Heart right ventricle (tissue), 16 donors: ENCODE measurements at regions of chr4 and their contacts with region 1.

Region 1: DNA sequence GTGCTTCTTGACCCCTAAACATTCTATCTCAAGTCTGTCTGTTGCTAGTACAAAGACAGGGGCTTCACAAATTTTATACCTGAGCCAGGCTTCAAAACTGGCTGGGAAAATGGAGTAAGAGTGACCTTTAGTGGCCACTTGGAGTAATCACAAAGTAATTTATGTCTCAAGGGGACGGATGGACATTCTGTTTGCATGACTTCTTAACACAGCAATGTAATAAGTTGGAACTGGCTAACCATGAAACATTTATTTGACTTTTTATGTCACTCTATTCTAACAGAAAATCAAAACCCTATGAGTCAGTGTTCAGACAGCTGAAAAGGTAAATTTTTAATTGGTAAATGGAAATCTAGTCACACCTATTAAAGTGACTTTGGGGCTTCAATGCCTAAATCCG is 600.6 kb downstream of the ANKRD50 start:
- DNase-seq: peak in 1 of 2 donors; percentile 32
- ATAC-seq: peak in 7 of 8 donors; percentile 82 to 95 (median 91)
- H3K4me3 ChIP-seq: peak overlapping the region in 1 of 10 donors; percentile 9
- H3K27ac ChIP-seq: peak overlapping the region in 6 of 10 donors; percentile 1 to 59 (median 36)
- H3K4me1 ChIP-seq: peaks cover 0 to 18% (median 10%) of the 10 kb centered on the region in 9 donors
- H3K27me3 ChIP-seq: no peaks in the 10 kb centered on the region
- CTCF ChIP-seq: peak; percentile 57 to 87 (median 75)

Region 2: GRCh38 chr4:123127218-123127617 is 984.7 kb before region 1 on chr4:
- intact Hi-C with region 1: loop called in 5 of 10 experiments (anchors 5 to 10 kb)
- DNase-seq: no peak
- ATAC-seq: peak in 3 of 8 donors; percentile 46 to 55 (median 49)
- H3K4me3 ChIP-seq: no peak overlapping the region
- H3K27ac ChIP-seq: peak overlapping the region in 4 of 10 donors; percentile 28 to 36 (median 33)
- H3K4me1 ChIP-seq: peaks cover 0 to 25% (median 4%) of the 10 kb centered on the region in 9 donors
- H3K27me3 ChIP-seq: no peaks in the 10 kb centered on the region
- CTCF ChIP-seq: peak in 8 of 9 donors; percentile 31 to 69 (median 50)

Region 3: GRCh38 chr4:123380728-123381716 is 730.9 kb before region 1 on chr4:
- intact Hi-C with region 1: loop called in 1 of 10 experiments (anchors 10 kb)
- DNase-seq: no peak
- ATAC-seq: no peak
- H3K4me3 ChIP-seq: no peak overlapping the region
- H3K27ac ChIP-seq: no peak overlapping the region
- H3K4me1 ChIP-seq: peaks cover 0 to 4% (median 2%) of the 10 kb centered on the region in 9 donors
- H3K27me3 ChIP-seq: no peaks in the 10 kb centered on the region
- CTCF ChIP-seq: no peak

Region 4: DNA sequence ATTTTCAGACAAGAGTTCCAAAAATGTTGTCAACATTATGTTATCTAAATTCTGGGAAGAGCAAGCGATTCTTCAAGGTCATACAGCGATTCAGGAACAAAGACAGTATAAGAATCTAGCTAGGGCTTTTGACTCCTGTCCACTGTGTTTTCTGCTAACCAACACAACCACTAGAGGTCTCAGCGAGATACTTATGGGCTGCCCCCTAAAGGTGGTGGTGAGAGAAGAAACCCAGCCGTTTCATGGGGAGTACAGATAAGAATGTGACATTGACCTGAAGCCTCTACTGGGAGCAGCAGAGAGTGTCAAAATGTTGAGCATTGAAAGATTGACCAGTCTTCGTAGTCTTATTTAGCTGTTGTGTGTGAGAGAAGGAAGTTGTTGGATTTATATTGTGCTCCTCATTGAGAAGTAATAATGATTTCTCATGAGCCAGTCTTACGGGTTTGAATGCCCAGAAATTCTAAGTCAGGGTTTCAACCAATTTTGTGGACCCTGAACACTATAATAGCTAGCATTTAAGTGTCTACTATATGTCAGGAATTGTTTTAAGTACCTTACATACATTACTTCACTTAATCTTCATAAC is 547.1 kb before region 1 on chr4:
- intact Hi-C with region 1: loop called in 4 of 10 experiments (anchors 10 kb)
- DNase-seq: peak in 1 of 2 donors; percentile 69
- ATAC-seq: peak; percentile 68 to 94 (median 91)
- H3K4me3 ChIP-seq: no peak overlapping the region
- H3K27ac ChIP-seq: no peak overlapping the region
- H3K4me1 ChIP-seq: peaks cover 0 to 7% (median 4%) of the 10 kb centered on the region in 9 donors
- H3K27me3 ChIP-seq: no peaks in the 10 kb centered on the region
- CTCF ChIP-seq: peak; percentile 56 to 92 (median 73)

Region 5: DNA sequence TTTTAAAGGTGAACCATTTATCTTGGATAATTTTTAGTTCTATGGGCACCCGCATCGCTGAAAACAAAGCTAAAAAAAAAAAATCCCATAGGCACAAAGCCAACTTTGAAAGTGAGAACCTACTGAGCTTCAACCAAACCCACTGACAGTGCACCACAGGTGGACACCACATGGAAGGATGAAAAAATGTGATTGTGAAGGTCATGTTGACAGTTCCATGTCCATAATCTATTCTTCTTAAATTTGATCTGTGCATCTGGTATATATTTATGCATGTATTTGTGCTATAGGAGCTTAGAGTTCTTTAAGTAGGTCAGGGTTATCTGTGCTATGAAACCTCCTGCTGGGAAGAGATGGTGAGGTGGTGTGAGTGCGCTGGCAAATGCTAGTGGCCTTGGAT is 341.0 kb before region 1 on chr4:
- intact Hi-C with region 1: loop called in 9 of 10 experiments (anchors 2 to 10 kb)
- DNase-seq: no peak
- ATAC-seq: no peak
- H3K4me3 ChIP-seq: no peak overlapping the region
- H3K27ac ChIP-seq: no peak overlapping the region
- H3K4me1 ChIP-seq: no peaks in the 10 kb centered on the region
- H3K27me3 ChIP-seq: no peaks in the 10 kb centered on the region
- CTCF ChIP-seq: no peak

Region 6: DNA sequence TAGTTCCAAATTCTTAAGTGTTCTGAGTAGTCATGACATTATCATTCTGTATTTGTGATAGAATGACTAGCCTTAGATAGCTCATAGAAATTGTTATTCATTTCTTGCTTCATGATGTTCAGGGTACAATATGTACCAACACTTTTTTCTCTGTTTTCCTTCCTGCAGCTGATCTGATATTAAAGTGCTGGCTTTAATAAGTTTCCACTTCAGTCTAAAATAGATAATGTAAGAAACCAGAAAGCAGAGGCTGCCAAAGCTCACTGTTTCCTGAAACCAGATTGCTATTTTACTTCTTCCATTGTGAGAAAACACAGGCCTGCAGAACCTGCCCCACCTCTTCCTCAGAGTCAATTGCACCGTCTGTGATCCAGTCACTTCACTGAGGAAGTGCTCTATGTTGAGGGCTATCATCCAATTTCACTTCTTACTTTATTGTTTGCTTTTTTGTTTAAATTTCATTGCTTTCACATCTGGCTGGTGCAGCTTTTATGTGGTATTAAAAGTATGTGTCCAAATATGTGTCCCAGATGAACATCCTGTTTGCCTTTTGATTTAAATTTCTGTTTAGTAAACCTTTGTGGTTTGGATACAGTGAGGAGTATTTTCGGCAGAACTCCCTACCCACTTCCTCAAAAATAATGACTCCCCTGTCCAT is 51.5 kb before region 1 on chr4:
- intact Hi-C with region 1: loop called in 2 of 10 experiments (anchors 5 kb)
- DNase-seq: peak; percentile 13 to 73
- ATAC-seq: peak; percentile 76 to 97 (median 94)
- H3K4me3 ChIP-seq: no peak overlapping the region
- H3K27ac ChIP-seq: peak overlapping the region; percentile 57 to 93 (median 76)
- H3K4me1 ChIP-seq: peaks cover 0 to 44% (median 28%) of the 10 kb centered on the region in 9 donors
- H3K27me3 ChIP-seq: no peaks in the 10 kb centered on the region
- CTCF ChIP-seq: no peak

Region 7: DNA sequence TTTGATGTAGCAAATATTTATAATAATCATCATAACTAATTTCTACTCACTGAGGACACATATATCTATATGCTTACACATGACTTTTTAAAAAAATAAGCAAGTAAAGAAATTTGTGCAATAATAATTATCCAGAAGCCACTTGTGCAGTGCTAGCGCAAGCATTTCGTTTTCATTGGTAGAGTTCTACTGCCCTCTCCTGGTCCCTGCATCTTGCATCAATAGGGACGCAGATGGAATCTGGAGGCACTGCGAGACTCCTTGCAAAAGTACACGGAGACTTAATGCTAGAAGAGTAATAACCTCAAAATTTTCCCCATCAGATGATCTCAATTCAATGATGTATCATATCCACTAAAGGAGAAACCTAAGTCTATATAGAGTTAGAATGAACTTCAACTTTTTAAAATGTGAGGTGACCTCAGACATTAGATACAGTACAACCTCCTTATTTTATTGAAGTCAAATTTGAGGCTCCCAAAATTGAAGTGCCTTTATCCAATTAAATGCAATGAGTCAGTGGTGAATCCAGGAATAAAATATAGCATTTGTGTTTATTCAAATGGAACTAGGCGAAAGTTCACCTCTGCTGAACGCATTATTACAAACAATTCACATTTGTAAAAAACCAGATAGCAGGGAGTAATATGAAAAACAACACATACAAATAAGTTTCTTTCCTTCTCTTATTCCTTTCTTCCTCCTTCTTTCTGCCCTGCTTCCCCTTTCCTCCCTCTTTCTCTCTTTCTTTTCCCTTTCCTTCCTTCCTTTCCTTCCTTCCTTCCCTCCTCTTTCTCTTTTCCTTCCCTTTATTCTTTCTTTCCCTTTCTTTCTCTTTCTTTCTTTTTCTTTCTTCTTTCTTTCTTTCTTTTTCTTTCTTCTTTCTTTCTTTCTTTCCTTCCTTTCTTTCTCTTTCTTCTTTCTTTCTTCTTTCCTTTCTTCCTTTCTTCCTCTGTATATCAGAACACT is 150.6 kb after region 1 on chr4:
- intact Hi-C with region 1: loop called in 3 of 10 experiments (anchors 5 to 10 kb)
- DNase-seq: peak in 1 of 2 donors; percentile 73
- ATAC-seq: peak; percentile 75 to 90 (median 84)
- H3K4me3 ChIP-seq: no peak overlapping the region
- H3K27ac ChIP-seq: peak overlapping the region in 1 of 10 donors; percentile 29
- H3K4me1 ChIP-seq: peaks cover 0 to 6% (median 0%) of the 10 kb centered on the region in 9 donors
- H3K27me3 ChIP-seq: no peaks in the 10 kb centered on the region
- CTCF ChIP-seq: peak; percentile 71 to 94 (median 85)

Region 8: GRCh38 chr4:124304941-124305340 is 193.0 kb after region 1 on chr4:
- intact Hi-C with region 1: no loop called
- DNase-seq: no peak
- ATAC-seq: peak in 3 of 8 donors; percentile 39 to 70 (median 44)
- H3K4me3 ChIP-seq: no peak overlapping the region
- H3K27ac ChIP-seq: no peak overlapping the region
- H3K4me1 ChIP-seq: peaks cover 0 to 7% (median 0%) of the 10 kb centered on the region in 9 donors
- H3K27me3 ChIP-seq: no peaks in the 10 kb centered on the region
- CTCF ChIP-seq: no peak